ENCODE measurements at regions of chr17 and their contacts with region 1.

Region 1: DNA sequence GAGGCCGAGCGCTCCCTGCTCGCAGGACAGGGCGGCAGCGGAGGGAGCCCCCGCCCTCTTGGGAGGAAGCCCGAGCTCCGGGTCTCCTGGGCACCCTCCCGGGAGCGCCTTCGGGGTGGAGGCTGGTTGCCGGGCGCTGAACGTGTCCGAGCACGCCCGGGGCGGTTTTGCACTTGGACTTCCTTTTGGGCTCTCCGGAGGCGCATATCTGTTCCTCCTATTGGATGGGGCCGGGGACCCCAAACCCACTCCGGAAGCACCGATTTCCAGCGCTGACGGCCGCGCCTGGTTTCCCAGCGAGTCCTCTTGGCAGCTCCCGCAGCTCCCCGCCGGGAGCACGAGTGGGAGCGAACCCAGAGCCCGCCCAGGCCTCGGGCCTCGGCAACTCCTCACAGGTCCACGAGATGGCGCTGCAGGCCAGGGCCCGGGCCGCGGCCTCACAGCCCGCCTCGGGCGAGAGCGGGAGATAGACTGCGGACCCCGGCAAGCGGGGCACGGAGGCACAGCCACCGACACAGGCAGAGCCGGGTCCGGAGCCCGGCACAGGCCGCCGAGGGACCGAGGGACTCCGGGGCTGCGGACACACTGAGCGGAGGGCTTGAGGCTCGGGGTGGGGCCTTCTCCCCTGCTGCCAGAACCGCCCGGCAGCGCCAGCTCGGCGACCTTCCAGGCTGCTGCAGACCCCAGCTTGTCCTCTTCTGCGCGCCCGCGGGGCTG is 12.7 kb downstream of the TBX2 start:
- DNase-seq: no peak
- H3K4me3 ChIP-seq: peak overlapping the region; percentile 66
- H3K27me3 ChIP-seq: no peaks in the 10 kb centered on the region
- CTCF ChIP-seq: peak; percentile 91

Region 2: GRCh38 chr17:60720763-60721531 is 691.4 kb before region 1 on chr17:
- CTCF ChIA-PET with region 1: interaction called, 10 read pairs
- POLR2A ChIA-PET with region 1: no interaction called
- DNase-seq: no peak
- H3K4me3 ChIP-seq: no peak overlapping the region
- H3K27me3 ChIP-seq: no peaks in the 10 kb centered on the region
- CTCF ChIP-seq: peak; percentile 87

Region 3: DNA sequence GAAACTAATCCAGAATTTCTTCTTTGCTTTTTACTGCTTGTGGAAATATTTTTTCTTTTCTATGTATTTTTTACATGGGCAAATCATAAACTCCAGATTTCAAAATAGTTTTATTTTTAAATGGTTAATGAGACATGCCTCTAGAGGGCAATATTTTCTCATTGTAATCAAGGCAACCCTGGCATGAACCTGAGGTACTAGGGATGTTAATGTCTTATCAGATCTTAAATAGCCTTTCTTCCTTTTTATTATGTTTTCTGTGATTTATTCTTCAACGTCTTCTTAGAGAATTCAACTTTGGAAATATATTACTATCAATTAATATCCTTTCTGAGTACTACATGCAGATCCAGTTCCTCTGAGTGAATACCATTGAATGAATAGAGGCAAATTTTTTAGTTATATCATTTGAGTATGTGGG is 410.0 kb before region 1 on chr17:
- CTCF ChIA-PET with region 1: interaction called, 36 read pairs
- POLR2A ChIA-PET with region 1: no interaction called
- DNase-seq: no peak
- H3K4me3 ChIP-seq: no peak overlapping the region
- H3K27me3 ChIP-seq: no peaks in the 10 kb centered on the region
- CTCF ChIP-seq: peak; percentile 48

Region 4: DNA sequence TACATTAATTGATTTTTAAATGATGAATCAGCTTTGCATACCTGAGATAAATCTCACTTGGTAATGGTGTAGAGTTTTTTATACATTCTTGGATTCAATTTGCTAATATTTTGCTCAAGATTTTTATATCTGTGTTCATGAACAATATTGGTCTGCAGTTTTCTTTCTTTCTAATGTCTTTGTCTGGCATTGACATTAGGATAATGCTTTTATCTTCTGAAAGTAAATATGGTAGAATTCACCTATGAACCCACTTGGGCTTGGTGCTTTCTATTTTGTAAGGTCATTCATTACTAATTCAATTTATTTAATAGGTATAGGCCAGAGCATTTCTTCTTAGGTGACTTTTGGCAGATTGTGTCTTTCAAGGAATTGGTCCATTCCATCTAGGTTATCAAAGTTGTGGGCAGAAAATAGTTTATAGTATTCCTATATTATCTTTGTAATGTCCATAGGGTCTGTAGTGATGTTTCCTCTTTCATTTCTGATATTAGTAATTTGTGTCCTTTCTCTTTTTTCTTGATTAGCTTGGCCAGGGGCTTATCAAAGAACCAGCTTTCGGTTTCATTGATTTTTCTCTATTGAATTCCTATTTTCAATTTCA is 133.1 kb after region 1 on chr17:
- CTCF ChIA-PET with region 1: interaction called, 36 read pairs
- POLR2A ChIA-PET with region 1: no interaction called
- DNase-seq: no peak
- H3K4me3 ChIP-seq: no peak overlapping the region
- H3K27me3 ChIP-seq: no peaks in the 10 kb centered on the region; the same call in 1 of the 2 replicates
- CTCF ChIP-seq: no peak

Region 5: GRCh38 chr17:61556224-61557188 is 144.2 kb after region 1 on chr17:
- CTCF ChIA-PET with region 1: interaction called, 36 read pairs
- POLR2A ChIA-PET with region 1: no interaction called
- DNase-seq: no peak
- H3K4me3 ChIP-seq: no peak overlapping the region
- H3K27me3 ChIP-seq: no peaks in the 10 kb centered on the region
- CTCF ChIP-seq: no peak

Region 6: DNA sequence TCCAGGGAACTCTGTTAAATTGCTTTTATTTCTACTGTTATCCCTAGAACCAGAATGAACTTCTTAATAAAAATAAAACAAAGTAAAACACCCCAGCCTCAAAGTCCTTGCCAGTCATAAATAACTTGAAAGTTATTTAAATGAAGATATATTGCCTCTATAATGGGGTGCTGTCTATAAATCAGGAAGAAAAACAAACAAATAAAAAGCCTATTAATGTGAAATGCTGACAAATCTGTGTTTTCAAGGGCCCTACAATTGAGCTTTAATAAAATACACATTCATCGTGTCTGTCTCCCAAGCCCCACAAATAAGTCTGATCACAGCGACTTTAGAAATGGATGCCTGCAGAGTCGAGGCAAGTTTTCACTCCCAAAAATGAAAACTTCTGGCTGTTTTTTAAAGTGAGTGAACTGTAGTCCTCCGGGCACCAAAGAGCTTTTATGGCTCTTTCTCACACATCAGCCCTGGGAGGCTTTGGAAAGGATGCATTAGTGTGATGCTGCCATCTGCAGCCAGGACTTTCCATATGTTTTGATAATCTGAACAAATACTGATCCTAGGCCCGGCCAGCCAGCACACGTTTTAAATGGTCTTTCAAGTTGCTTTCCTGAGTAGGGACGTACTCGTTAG is 162.4 kb after region 1 on chr17:
- CTCF ChIA-PET with region 1: interaction called, 206 read pairs
- POLR2A ChIA-PET with region 1: no interaction called
- DNase-seq: no peak
- H3K4me3 ChIP-seq: no peak overlapping the region
- H3K27me3 ChIP-seq: no peaks in the 10 kb centered on the region
- CTCF ChIP-seq: peak; percentile 50

Region 7: GRCh38 chr17:61837175-61838051 is 425.1 kb after region 1 on chr17:
- CTCF ChIA-PET with region 1: interaction called, 13 read pairs
- POLR2A ChIA-PET with region 1: no interaction called
- DNase-seq: peak; percentile 10
- H3K4me3 ChIP-seq: no peak overlapping the region
- H3K27me3 ChIP-seq: no peaks in the 10 kb centered on the region
- CTCF ChIP-seq: peak; percentile 80